ENCODE measurements at regions of chr14 and their contacts with region 1.

Region 1: GRCh38 chr14:91177073-91178034 is 63.5 kb downstream of the DGLUCY start:
- DNase-seq: peak; percentile 61

Region 2: DNA sequence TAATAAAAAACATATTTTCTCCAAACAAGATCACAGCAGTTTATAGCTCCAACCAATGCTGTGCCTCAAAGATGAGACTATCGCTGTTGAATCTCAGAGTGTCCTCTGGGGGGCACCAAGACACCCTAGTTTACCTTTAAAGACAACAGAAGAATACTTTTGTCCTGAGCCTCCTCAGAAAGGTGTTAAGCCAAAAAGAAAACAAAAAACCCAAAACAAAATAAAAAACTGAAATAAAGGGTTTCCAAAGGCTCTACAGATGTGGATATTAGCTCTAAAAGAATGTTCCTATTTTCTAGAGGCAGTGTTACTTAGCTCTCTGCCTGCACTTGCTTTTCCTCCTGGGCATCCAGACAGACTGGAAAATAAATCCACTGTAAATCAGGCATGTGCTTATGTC is 274.3 kb before region 1 on chr14:
- CTCF ChIA-PET with region 1: interaction called, 31 read pairs
- POLR2A ChIA-PET with region 1: no interaction called
- DNase-seq: peak; percentile 64

Region 3: GRCh38 chr14:91286530-91286937 is 109.2 kb after region 1 on chr14:
- CTCF ChIA-PET with region 1: interaction called, 30 read pairs
- POLR2A ChIA-PET with region 1: interaction called, 3 read pairs
- DNase-seq: peak; percentile 83

Measured in HEK293T (cell line).